Naive thymus-derived CD4-positive, alpha-beta T cell (primary cell): ENCODE measurements at regions of chr6 and their contacts with region 1.

Region 1: GRCh38 chr6:139375232-139376016 is 976 bp upstream of the CITED2 start:
- DNase-seq: peak; percentile 70 to 91 (median 88)
- ATAC-seq: peak; percentile 68
- H3K4me3 ChIP-seq: peak overlapping the region; percentile 71
- H3K4me3 Mint-ChIP-seq: peak overlapping the region; percentile 95 to 100 (median 100)
- H3K27ac ChIP-seq: peak overlapping the region; percentile 82
- H3K27ac Mint-ChIP-seq: peak overlapping the region; percentile 95 to 100 (median 98)
- H3K4me1 ChIP-seq: peaks cover 20 to 26% of the 10 kb centered on the region in 2 donors
- H3K4me1 Mint-ChIP-seq: peaks cover 21 to 38% (median 26%) of the 10 kb centered on the region in 7 donors
- H3K27me3 ChIP-seq: no peaks in the 10 kb centered on the region
- H3K27me3 Mint-ChIP-seq: no peaks in the 10 kb centered on the region

Region 2: DNA sequence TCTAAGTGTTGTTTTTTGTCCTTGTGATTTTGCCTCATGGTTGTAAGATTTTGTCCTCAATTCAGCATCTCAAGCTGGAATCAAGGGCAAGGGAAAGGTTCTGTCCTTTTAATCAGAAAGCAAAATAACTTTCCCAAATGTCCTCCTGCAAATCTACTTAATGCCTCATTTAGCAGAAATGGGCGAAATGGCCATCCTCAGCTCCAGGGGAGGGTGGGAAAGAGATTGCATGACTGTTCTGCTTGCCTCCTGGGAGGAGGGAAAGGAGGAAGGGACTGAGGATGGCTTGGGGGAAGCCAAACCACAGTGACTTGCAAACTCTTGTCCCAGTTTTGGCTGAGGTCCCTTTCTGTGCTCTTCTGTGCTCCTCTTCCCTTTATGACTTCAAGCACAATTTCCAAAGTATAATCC is 1465.0 kb before region 1 on chr6:
- CTCF ChIA-PET with region 1: no interaction called
- POLR2A ChIA-PET with region 1: no interaction called
- intact Hi-C with region 1: no loop called
- DNase-seq: no peak
- ATAC-seq: peak; percentile 52
- H3K4me3 ChIP-seq: no peak overlapping the region
- H3K4me3 Mint-ChIP-seq: no peak overlapping the region
- H3K27ac ChIP-seq: no peak overlapping the region
- H3K27ac Mint-ChIP-seq: peak overlapping the region in 1 of 9 donors; percentile 10
- H3K4me1 ChIP-seq: peaks cover 1 to 2% of the 10 kb centered on the region in 2 donors
- H3K4me1 Mint-ChIP-seq: peaks cover 13 to 58% (median 25%) of the 10 kb centered on the region in 7 donors
- H3K27me3 ChIP-seq: no peaks in the 10 kb centered on the region
- H3K27me3 Mint-ChIP-seq: peaks cover 0 to 13% (median 0%) of the 10 kb centered on the region in 5 donors

Region 3: GRCh38 chr6:138403801-138404661 is 971.4 kb before region 1 on chr6 and contains the start of gene HEBP2:
- CTCF ChIA-PET with region 1: no interaction called
- POLR2A ChIA-PET with region 1: interaction called, 3 read pairs
- intact Hi-C with region 1: loop called in 1 of 2 experiments (anchors 1 kb)
- DNase-seq: peak; percentile 77 to 95 (median 90)
- ATAC-seq: peak; percentile 94
- H3K4me3 ChIP-seq: peak within 1 kb of the TSS; percentile 98
- H3K4me3 Mint-ChIP-seq: peak within 1 kb of the TSS; percentile 78 to 93 (median 86)
- H3K27ac ChIP-seq: peak within 1 kb of the TSS; percentile 76
- H3K27ac Mint-ChIP-seq: peak within 1 kb of the TSS; percentile 70 to 95 (median 89)
- H3K4me1 ChIP-seq: peaks cover 12 to 14% of the 10 kb centered on the region in 2 donors
- H3K4me1 Mint-ChIP-seq: peaks cover 6 to 43% (median 32%) of the 10 kb centered on the region in 7 donors
- H3K27me3 ChIP-seq: no peaks in the 10 kb centered on the region
- H3K27me3 Mint-ChIP-seq: peaks cover 0 to 22% (median 0%) of the 10 kb centered on the region in 5 donors
- total RNA-seq, gene HEBP2: 24.9 to 50.7 (median 48.2) TPM

Region 4: GRCh38 chr6:139028658-139029469 is 346.6 kb before region 1 on chr6 and contains the start of gene ABRACL:
- CTCF ChIA-PET with region 1: interaction called, 3 read pairs
- POLR2A ChIA-PET with region 1: interaction called, 20 read pairs
- intact Hi-C with region 1: loop called (anchors 1 kb)
- DNase-seq: peak; percentile 44 to 87 (median 81)
- ATAC-seq: peak; percentile 88
- H3K4me3 ChIP-seq: peak within 1 kb of the TSS; percentile 72
- H3K4me3 Mint-ChIP-seq: peak within 1 kb of the TSS in 6 of 10 donors; percentile 88 to 98 (median 94)
- H3K27ac ChIP-seq: peak within 1 kb of the TSS; percentile 88
- H3K27ac Mint-ChIP-seq: peak within 1 kb of the TSS in 8 of 9 donors; percentile 58 to 97 (median 94)
- H3K4me1 ChIP-seq: peaks cover 3 to 18% of the 10 kb centered on the region in 2 donors
- H3K4me1 Mint-ChIP-seq: peaks cover 13 to 35% (median 24%) of the 10 kb centered on the region in 7 donors
- H3K27me3 ChIP-seq: no peaks in the 10 kb centered on the region
- H3K27me3 Mint-ChIP-seq: no peaks in the 10 kb centered on the region
- total RNA-seq, gene ABRACL: 39.5 to 137 (median 107) TPM

Region 5: GRCh38 chr6:139153855-139154254 is 221.6 kb before region 1 on chr6:
- CTCF ChIA-PET with region 1: interaction called, 6 read pairs
- POLR2A ChIA-PET with region 1: interaction called, 30 read pairs
- intact Hi-C with region 1: no loop called
- DNase-seq: no peak
- ATAC-seq: no peak
- H3K4me3 ChIP-seq: no peak overlapping the region
- H3K4me3 Mint-ChIP-seq: peak overlapping the region in 9 of 10 donors; percentile 22 to 78 (median 40)
- H3K27ac ChIP-seq: no peak overlapping the region
- H3K27ac Mint-ChIP-seq: peak overlapping the region; percentile 36 to 94 (median 61)
- H3K4me1 ChIP-seq: peaks cover 58 to 78% of the 10 kb centered on the region in 2 donors
- H3K4me1 Mint-ChIP-seq: peaks cover 69 to 93% (median 82%) of the 10 kb centered on the region in 7 donors
- H3K27me3 ChIP-seq: no peaks in the 10 kb centered on the region
- H3K27me3 Mint-ChIP-seq: no peaks in the 10 kb centered on the region

Region 6: GRCh38 chr6:139364302-139364981 is 11.0 kb before region 1 on chr6:
- CTCF ChIA-PET with region 1: interaction called, 24 read pairs
- POLR2A ChIA-PET with region 1: interaction called, 21 read pairs
- intact Hi-C with region 1: no loop called
- DNase-seq: peak in 6 of 9 donors; percentile 50 to 74 (median 64)
- ATAC-seq: peak; percentile 81
- H3K4me3 ChIP-seq: no peak overlapping the region
- H3K4me3 Mint-ChIP-seq: peak overlapping the region in 2 of 10 donors; percentile 22 to 34
- H3K27ac ChIP-seq: no peak overlapping the region
- H3K27ac Mint-ChIP-seq: peak overlapping the region; percentile 16 to 88 (median 37)
- H3K4me1 ChIP-seq: peaks cover 0 to 18% of the 10 kb centered on the region in 2 donors
- H3K4me1 Mint-ChIP-seq: peaks cover 17 to 67% (median 53%) of the 10 kb centered on the region in 7 donors
- H3K27me3 ChIP-seq: no peaks in the 10 kb centered on the region
- H3K27me3 Mint-ChIP-seq: peaks cover 0 to 2% (median 0%) of the 10 kb centered on the region in 5 donors

Region 7: DNA sequence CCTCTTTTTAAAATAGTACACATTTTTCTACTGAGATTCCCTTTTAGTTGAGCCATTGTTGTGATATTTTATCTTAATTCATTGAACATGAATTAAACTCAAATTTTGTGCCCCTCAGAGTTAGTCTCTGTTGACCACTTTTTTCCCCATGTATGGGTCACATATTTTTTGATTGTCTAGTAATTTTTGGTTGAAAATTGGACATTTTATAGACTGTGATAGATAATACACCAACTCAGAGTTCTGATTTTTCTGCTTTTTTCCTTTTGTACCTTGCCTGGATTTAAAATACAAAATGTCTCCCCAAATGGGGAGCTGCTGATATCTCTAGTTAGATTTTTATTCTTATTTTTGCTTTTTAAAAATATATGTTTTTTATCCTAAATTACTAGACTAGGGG is 290.9 kb after region 1 on chr6:
- CTCF ChIA-PET with region 1: no interaction called
- POLR2A ChIA-PET with region 1: no interaction called
- intact Hi-C with region 1: no loop called
- DNase-seq: no peak
- ATAC-seq: no peak
- H3K4me3 ChIP-seq: no peak overlapping the region
- H3K4me3 Mint-ChIP-seq: no peak overlapping the region
- H3K27ac ChIP-seq: no peak overlapping the region
- H3K27ac Mint-ChIP-seq: no peak overlapping the region
- H3K4me1 ChIP-seq: no peaks in the 10 kb centered on the region
- H3K4me1 Mint-ChIP-seq: no peaks in the 10 kb centered on the region
- H3K27me3 ChIP-seq: no peaks in the 10 kb centered on the region
- H3K27me3 Mint-ChIP-seq: peaks cover 5 to 31% (median 18%) of the 10 kb centered on the region in 5 donors

Region 8: DNA sequence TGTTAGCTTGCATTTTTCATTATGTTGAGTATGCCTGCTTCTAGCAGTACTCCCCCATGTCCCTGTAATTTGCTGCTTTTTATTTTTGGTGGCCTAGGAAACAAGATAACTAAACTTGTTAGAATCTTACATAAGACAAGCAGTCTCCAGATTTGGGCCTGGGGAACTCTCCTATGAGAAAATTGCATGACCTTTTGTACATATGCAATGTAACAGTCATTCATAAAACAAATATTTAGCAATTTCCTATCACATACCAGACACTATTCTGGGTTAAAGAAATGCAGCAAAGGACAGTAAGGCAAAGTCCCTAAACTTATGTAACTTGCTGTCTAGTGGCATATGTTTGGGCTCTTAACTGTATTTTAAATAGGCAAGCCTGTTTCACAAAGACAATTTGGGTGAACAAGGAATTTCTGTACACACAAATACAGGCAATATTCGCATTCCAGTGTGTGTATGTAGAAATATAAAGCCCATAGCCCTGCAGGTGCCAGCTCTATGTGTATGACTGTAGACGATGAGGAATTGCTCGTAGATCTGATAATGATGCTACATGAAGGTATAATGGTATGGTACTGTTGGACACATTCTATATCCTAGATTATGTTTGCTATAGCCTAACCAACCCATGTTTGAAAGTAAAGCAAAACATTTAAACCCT is 304.2 kb after region 1 on chr6:
- CTCF ChIA-PET with region 1: no interaction called
- POLR2A ChIA-PET with region 1: no interaction called
- intact Hi-C with region 1: loop called in 1 of 2 experiments (anchors 10 kb)
- DNase-seq: no peak
- ATAC-seq: no peak
- H3K4me3 ChIP-seq: no peak overlapping the region
- H3K4me3 Mint-ChIP-seq: no peak overlapping the region
- H3K27ac ChIP-seq: no peak overlapping the region
- H3K27ac Mint-ChIP-seq: no peak overlapping the region
- H3K4me1 ChIP-seq: no peaks in the 10 kb centered on the region
- H3K4me1 Mint-ChIP-seq: no peaks in the 10 kb centered on the region
- H3K27me3 ChIP-seq: no peaks in the 10 kb centered on the region
- H3K27me3 Mint-ChIP-seq: peaks cover 0 to 1% (median 0%) of the 10 kb centered on the region in 5 donors

Region 9: GRCh38 chr6:140809694-140810101 is 1434.3 kb after region 1 on chr6:
- CTCF ChIA-PET with region 1: no interaction called
- POLR2A ChIA-PET with region 1: no interaction called
- intact Hi-C with region 1: loop called in 1 of 2 experiments (anchors 10 kb)
- DNase-seq: no peak
- ATAC-seq: peak; percentile 63
- H3K4me3 ChIP-seq: no peak overlapping the region
- H3K4me3 Mint-ChIP-seq: no peak overlapping the region
- H3K27ac ChIP-seq: no peak overlapping the region
- H3K27ac Mint-ChIP-seq: peak overlapping the region in 1 of 9 donors; percentile 77
- H3K4me1 ChIP-seq: no peaks in the 10 kb centered on the region
- H3K4me1 Mint-ChIP-seq: peaks cover 0 to 22% (median 0%) of the 10 kb centered on the region in 7 donors
- H3K27me3 ChIP-seq: no peaks in the 10 kb centered on the region
- H3K27me3 Mint-ChIP-seq: peaks cover 4 to 11% (median 7%) of the 10 kb centered on the region in 5 donors